OCI-LY7 (cell line): ENCODE measurements at regions of chr11 and their contacts with region 1.

Region 1: DNA sequence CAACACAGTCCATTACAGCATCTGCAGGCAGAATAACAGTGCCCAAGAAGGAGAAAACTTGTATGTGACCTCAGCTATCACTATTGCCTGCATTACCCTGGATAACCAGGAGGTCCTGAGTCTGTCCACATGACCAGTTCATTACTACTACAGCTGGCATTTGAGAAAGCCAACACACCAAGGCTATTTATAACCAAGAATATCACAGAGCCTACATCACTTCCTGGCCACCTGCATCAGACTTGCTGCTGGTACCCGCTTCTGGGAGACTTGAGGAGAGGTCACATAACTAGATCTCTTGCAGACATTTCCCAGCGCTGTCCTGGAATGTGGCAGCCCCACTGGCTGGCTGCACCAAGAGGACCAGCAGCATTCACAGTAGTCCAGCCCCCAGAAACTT is 11.1 kb upstream of the OR56B4 start:
- DNase-seq: peak; percentile 83
- H3K4me3 ChIP-seq: peak overlapping the region; percentile 41
- H3K27ac ChIP-seq: peak overlapping the region; percentile 49
- H3K4me1 ChIP-seq: peaks cover 54% of the 10 kb centered on the region
- CTCF ChIP-seq: no peak; the same call in 1 of the 2 replicates

Region 2: DNA sequence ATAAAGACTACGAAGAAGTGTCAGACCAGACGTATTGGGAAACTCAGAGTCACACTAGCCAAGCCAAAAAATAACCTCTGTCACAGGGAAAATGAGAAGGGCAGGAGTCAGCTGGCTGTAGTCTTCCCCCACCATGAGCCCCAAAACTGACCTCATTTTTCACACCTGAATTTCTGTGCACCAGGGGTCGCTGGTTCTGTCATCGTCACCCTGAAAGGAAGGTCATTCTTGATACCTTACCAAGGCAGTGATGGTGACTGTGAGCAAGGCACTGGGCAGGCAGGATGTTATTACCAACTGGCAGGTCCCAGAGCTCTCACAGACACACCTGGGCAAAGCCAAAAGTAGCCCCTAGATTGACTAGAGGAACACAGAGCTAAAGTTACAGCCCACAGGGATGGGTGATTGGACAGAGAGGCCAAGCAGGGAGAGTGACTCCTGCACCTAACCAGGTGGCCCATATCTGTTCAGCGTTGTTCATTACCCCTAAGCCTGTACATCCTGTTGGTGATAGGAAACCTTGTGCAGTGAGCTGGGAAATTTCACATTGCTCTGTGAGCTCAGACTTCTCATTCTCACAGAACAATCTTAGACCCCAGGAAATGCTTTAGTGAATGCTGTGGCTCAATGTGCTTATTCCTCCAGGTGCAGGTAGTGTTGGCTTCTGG is 33.6 kb before region 1 on chr11:
- CTCF ChIA-PET with region 1: no interaction called
- POLR2A ChIA-PET with region 1: no interaction called
- intact Hi-C with region 1: loop called (anchors 2 kb)
- DNase-seq: peak; percentile 58
- H3K4me3 ChIP-seq: no peak overlapping the region
- H3K27ac ChIP-seq: peak overlapping the region; percentile 16
- H3K4me1 ChIP-seq: peaks cover 13% of the 10 kb centered on the region
- CTCF ChIP-seq: peak; percentile 64

Region 3: GRCh38 chr11:6251120-6251733 is 154.8 kb after region 1 on chr11:
- CTCF ChIA-PET with region 1: interaction called, 3 read pairs
- POLR2A ChIA-PET with region 1: interaction called, 16 read pairs
- intact Hi-C with region 1: no loop called
- DNase-seq: peak; percentile 47
- H3K4me3 ChIP-seq: no peak overlapping the region
- H3K27ac ChIP-seq: no peak overlapping the region
- H3K4me1 ChIP-seq: no peaks in the 10 kb centered on the region
- CTCF ChIP-seq: peak; percentile 80